H1 (cell line): ENCODE measurements at regions of chr1 and their contacts with region 1.

Region 1: DNA sequence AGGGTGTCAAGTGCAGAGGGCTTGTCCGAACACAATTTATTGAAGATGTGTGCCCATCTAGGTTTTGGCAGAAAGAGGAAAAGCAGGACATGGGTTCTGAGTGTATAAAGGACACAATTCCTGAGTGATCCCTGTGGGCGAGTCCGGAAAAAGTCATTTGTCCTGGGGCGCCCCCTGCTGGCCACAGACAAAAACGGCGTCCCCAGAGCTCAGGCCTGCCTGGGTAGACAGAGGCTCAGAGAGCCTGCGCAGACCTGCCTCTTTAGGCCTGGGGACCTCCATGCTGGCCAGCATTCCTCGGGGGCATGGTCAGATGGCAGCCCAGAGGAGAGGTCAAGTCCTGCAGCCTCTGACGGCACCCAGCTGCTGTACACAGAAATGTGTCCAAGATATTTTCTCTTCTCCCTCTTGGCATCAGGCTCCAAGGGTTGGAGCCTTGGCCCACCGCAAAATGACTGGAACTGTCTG is 65.5 kb upstream of the LRP8 start:
- DNase-seq: peak; percentile 39 to 97
- H3K4me3 ChIP-seq: no peak overlapping the region
- H3K27ac ChIP-seq: no peak overlapping the region
- H3K4me1 ChIP-seq: peaks cover 4 to 16% (median 10%) of the 10 kb centered on the region in 4 experiments; a peak in 6 of 7 replicates
- H3K27me3 ChIP-seq: no peaks in the 10 kb centered on the region; a peak in 2 of 7 replicates
- CTCF ChIP-seq: peak; percentile 79 to 94 (median 89)
- EP300 ChIP-seq: no peak
- POLR2A ChIP-seq: no peak
- RAD21 ChIP-seq: peak; percentile 89 to 92

Region 2: DNA sequence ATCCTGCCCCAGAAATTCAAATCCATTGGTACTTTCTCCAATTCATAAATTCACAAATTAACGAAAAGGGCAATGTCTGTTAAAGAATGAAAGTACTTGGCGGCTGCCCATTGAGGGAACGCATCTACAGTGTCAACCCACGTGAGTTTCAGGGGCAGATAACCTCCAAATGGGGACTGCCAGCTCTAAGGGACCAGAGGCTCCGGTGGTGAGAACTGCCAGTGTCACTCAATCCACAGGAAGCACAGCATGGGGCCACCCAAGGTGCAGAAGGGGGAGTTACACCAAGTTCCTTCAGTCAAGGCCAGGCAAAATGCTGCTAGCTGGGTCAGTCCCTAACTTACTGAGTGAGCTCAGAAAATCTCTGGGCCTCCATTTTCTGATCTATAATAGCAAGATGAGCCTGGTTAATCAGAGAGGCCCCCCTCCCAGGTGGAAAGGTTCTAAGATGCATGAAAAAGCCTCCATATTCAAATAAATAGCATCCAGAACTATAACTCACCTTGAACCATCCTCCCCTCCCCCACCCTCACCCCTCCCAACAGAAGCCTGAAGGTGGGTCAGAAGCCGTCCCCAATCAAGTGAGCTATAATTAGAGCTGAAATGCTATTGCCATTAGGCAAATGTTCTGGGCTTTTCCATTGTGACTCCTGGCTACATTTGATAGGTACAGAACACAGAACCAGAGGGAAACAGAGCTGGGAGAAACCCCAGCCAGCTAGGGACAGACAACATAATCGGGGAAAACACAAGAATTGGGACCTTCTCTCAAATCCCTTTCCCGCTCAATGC is 107.2 kb before region 1 on chr1:
- CTCF ChIA-PET with region 1: interaction called, 85 read pairs
- POLR2A ChIA-PET with region 1: no interaction called
- DNase-seq: no peak
- H3K4me3 ChIP-seq: no peak overlapping the region
- H3K27ac ChIP-seq: no peak overlapping the region
- H3K4me1 ChIP-seq: peaks cover 0 to 18% (median 2%) of the 10 kb centered on the region in 4 experiments; a peak in 3 of 7 replicates
- H3K27me3 ChIP-seq: no peaks in the 10 kb centered on the region
- CTCF ChIP-seq: no peak
- EP300 ChIP-seq: no peak
- POLR2A ChIP-seq: no peak
- RAD21 ChIP-seq: no peak

Region 3: GRCh38 chr1:53376041-53376461 is 17.3 kb before region 1 on chr1:
- CTCF ChIA-PET with region 1: interaction called, 29 read pairs
- POLR2A ChIA-PET with region 1: interaction called, 3 read pairs
- DNase-seq: peak in 1 of 2 experiments; percentile 53
- H3K4me3 ChIP-seq: no peak overlapping the region
- H3K27ac ChIP-seq: no peak overlapping the region
- H3K4me1 ChIP-seq: peaks cover 0 to 8% (median 3%) of the 10 kb centered on the region in 4 experiments; a peak in 3 of 7 replicates
- H3K27me3 ChIP-seq: peaks cover 0 to 3% (median 0%) of the 10 kb centered on the region in 4 experiments; a peak in 2 of 7 replicates
- CTCF ChIP-seq: no peak
- EP300 ChIP-seq: no peak
- POLR2A ChIP-seq: no peak
- RAD21 ChIP-seq: no peak

Region 4: DNA sequence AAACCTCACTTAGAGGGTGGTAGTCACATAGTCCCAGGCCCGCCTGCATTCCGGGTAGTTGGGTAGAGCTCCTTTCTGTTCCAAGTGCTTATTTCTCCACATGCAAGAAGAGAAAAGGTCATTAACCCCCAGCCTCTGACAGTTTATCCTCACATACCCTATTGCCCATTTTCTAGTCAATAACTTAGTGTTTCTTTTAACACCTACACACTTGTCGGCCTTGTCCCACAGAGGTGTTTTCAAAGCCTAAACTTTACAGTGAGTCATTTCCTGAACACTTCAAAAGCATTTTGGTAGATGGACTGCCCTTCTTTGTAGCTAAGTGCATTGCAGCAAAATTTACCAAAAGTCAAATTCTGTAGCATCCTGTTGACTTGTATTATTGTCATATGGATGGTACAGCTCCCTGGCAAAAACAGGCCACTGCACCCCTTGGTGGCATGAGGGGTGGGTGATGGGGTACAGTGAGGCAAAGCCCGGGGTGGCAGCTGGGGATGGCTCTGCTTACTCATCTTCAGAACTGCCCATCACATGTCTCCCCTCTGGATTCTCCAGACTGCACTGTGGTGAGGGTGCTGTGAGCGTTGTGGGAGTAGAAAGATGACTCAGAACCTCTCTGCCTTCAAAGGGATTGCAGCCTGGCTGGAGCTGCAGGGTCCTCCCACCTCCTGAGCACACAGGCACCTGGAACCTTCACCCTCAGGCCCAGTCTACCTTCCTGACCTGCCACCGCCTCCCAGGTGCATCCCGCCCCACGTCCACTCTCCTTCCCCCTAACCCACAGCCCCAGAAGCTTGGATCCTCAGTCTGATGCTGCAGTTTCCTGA is 20.0 kb after region 1 on chr1:
- CTCF ChIA-PET with region 1: interaction called, 10 read pairs
- POLR2A ChIA-PET with region 1: interaction called, 4 read pairs
- DNase-seq: peak in 1 of 2 experiments; percentile 35
- H3K4me3 ChIP-seq: no peak overlapping the region
- H3K27ac ChIP-seq: no peak overlapping the region
- H3K4me1 ChIP-seq: peaks cover 4 to 24% (median 11%) of the 10 kb centered on the region in 4 experiments; a peak in 6 of 7 replicates
- H3K27me3 ChIP-seq: no peaks in the 10 kb centered on the region; a peak in 3 of 7 replicates
- CTCF ChIP-seq: no peak
- EP300 ChIP-seq: no peak
- POLR2A ChIP-seq: no peak
- RAD21 ChIP-seq: no peak